ENCODE measurements at regions of chr7 and their contacts with region 1.

Region 1: DNA sequence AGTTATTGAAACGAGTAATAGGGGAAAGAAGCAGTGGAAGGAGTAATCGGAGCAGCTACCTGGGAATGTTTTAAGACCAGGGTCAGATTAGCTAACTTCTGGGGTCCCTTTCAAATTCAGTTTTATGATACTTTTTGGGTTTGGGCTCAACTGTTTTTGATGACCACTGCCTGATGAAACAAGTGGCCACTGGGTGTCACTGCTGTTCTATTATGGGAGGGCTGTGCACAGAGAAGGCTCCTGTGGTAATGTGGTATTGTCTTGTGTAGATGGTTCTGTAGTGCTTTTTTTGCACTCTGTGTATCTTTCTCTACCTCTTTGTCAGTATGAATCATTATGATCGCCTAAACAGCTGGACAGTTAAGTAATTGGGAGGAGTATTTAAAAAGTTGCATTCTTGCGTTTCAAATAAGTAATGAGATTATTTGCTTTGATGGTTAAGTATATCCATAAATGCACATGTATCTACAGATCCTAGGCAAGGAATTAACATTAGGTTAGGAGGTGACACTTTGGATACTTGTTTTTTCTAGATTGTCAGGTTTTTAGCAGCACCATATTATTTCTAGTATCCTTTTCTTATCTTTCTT is 128.4 kb downstream of the ABCA13 start:
- DNase-seq: peak; percentile 52
- ATAC-seq: peak; percentile 97
- H3K4me3 ChIP-seq: no peak overlapping the region
- H3K27ac ChIP-seq: no peak overlapping the region
- H3K4me1 ChIP-seq: no peaks in the 10 kb centered on the region
- H3K27me3 ChIP-seq: no peaks in the 10 kb centered on the region
- CTCF ChIP-seq: peak; percentile 94

Region 2: GRCh38 chr7:47520406-47520805 is 779.3 kb before region 1 on chr7:
- CTCF ChIA-PET with region 1: no interaction called
- POLR2A ChIA-PET with region 1: no interaction called
- in situ Hi-C with region 1: no loop called
- intact Hi-C with region 1: no loop called
- DNase-seq: no peak
- ATAC-seq: no peak
- H3K4me3 ChIP-seq: no peak overlapping the region
- H3K27ac ChIP-seq: peak overlapping the region; percentile 86
- H3K4me1 ChIP-seq: peaks cover 91% of the 10 kb centered on the region
- H3K27me3 ChIP-seq: no peaks in the 10 kb centered on the region
- CTCF ChIP-seq: no peak

Region 3: DNA sequence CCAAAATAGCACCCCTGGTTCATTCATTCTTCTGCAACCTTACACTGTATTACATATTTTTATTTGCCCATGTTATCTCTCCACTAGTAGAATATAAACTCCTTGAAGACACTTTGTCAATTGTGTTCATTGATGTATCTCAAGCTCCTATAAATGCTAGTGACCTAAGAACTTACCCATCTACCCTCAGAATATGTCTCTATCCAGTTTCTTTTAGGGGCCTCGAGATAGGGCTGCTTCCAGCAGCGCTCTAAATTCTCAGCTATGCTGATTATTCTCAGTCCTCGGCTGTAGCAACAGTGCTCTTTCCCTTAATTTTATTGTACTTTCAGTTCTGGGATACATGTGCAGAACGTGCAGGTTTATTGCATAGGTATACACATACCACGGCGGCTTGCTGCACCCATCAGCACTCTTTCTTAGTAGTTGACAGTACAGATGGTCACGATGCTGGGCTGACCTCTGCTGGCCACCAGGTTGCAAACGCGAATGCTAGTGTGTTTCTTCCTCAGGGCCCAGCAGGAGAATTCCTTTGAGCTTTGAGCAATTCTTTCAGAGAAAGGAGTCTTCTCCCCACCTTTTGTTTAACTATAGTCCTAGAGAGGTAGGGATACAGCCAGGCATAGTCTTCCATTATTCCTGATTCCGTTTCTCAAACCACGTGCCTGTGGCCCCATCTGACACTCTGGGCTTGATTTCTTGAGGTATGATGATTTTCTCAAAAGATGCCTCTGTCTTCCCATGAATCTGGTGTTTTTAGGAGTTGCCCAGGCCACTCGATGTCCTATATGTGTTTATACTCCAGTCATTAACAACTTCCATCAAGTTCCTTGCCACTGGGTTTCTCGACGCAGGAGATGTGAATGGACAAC is 575.6 kb after region 1 on chr7:
- CTCF ChIA-PET with region 1: no interaction called
- POLR2A ChIA-PET with region 1: no interaction called
- in situ Hi-C with region 1: no loop called
- intact Hi-C with region 1: loop called (anchors 1 kb)
- DNase-seq: peak; percentile 18
- ATAC-seq: peak; percentile 99
- H3K4me3 ChIP-seq: no peak overlapping the region
- H3K27ac ChIP-seq: peak overlapping the region; percentile 32; the same call in 1 of the 2 replicates
- H3K4me1 ChIP-seq: 0 out of 2 replicates have a peak, but pooled peaks cover 2% of the 10 kb centered on the region
- H3K27me3 ChIP-seq: no peaks in the 10 kb centered on the region
- CTCF ChIP-seq: peak; percentile 91

Measured in Panc1 (cell line).